Psoas muscle (tissue), 8 donors: ENCODE measurements at regions of chr19 and their contacts with region 1.

Region 1: GRCh38 chr19:47296036-47296435 is 13.6 kb upstream of the C5AR1 start:
- DNase-seq: peak; percentile 49 to 66
- ATAC-seq: peak; percentile 64 to 86 (median 76)
- H3K4me3 ChIP-seq: no peak overlapping the region
- H3K27ac ChIP-seq: no peak overlapping the region
- H3K4me1 ChIP-seq: no peaks in the 10 kb centered on the region
- H3K27me3 ChIP-seq: no peaks in the 10 kb centered on the region
- CTCF ChIP-seq: peak; percentile 73

Region 2: DNA sequence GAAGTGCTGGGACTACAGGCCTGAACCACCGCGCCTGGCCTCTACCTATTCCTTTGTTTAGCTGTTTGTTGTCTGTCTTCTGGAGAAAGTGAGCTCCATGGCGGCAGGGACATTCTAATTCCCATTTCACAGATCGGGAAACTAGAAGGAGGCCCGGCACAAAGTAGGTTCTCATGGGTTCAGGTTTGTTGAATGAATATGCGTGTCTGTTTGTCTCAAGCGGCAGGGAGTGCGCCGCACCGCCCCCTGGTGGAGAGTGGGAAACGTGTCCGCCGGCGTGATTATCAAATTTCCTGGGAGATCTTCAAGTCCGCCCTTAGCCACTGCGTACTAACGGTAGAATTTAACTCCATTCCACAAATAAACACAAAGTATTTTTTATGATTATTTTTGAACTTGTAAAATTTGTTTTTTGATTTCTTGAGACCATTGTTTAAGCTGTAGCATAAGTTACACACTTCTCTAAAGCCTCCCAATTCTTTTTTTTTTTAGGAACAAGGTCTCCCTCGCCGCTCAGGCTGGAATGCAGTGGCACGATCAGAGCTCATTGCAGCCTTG is 48.6 kb before region 1 on chr19:
- intact Hi-C with region 1: no loop called
- DNase-seq: peak; percentile 86 to 89
- ATAC-seq: peak in 2 of 4 donors; percentile 52 to 62
- H3K4me3 ChIP-seq: no peak overlapping the region
- H3K27ac ChIP-seq: no peak overlapping the region
- H3K4me1 ChIP-seq: peaks cover 7% of the 10 kb centered on the region
- H3K27me3 ChIP-seq: peaks cover 0 to 2% (median 0%) of the 10 kb centered on the region in 3 donors
- CTCF ChIP-seq: peak; percentile 95

Region 3: DNA sequence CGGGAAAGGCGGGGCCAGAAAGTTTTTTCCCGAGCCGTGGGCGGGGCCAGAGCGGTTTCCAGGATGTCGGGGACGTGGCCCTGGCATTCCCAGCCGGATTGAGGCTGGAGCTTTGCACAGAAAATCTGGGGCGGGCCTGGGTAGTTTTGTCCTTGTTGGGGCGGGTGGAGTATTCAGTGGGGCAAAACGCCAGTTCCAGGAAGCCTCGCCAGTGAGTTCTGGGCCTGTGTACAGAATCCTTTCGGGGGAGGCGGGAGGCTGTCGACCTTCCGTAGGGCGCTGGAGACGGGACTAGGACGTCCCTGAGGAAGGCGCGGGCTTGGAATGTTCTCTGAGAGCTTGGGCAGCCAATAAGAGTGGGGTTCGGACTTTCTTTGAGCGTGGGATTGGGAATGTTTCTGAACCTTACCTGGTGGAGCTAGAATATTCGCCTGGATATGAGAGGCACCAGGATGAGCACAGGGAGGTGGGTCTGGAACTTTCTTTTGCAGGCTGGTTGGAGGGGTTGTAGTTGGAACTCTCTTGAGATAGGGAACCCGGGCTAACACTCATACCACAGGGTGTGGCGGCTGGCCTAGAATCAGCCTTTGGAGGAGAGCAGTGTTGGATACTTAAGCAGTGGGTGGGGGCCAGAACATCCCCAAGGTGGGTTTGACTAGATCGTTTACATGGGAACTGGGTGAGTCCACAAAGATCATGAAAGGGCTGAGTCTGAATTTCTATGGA is 38.4 kb before region 1 on chr19:
- intact Hi-C with region 1: no loop called
- DNase-seq: no peak
- ATAC-seq: peak; percentile 8 to 30 (median 20)
- H3K4me3 ChIP-seq: peak overlapping the region; percentile 68
- H3K27ac ChIP-seq: peak overlapping the region; percentile 89
- H3K4me1 ChIP-seq: peaks cover 30% of the 10 kb centered on the region
- H3K27me3 ChIP-seq: no peaks in the 10 kb centered on the region
- CTCF ChIP-seq: no peak

Region 4: DNA sequence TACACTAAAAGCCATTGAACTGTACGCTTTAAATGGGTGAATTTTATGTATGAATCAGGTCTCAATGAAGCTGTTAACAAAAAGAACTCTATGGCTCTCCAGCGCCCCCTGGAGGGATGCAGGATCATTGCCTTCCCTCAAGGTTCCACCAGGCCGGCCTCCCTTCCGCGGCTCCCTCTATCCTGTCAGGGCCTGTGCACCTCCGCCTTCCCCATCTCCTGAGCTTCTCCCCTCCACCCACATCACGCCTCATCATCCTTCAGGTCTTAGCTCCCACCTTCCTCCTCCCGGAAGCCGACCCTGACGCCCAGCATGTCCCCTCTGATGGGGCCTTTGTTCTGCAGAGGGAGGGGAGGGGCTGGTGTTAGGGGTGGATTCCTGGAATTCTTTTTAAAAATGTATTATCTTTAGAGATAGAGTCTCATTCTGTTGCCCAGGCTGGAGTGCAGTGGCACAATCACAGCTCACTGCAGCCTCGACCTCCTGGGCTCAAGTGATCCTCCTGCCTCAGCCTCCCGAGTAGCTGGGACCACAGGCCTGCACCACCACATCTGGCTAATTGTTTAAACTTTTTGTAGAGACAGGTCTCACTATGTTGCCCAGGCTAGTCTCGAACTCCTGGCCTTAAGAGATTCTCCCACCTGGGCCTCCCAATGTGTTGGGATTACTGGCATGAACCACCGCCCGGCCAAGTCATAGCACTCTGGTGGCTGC is 95.6 kb after region 1 on chr19:
- intact Hi-C with region 1: loop called (anchors 2 to 10 kb)
- DNase-seq: peak; percentile 73 to 81
- ATAC-seq: peak; percentile 67 to 71 (median 68)
- H3K4me3 ChIP-seq: no peak overlapping the region
- H3K27ac ChIP-seq: no peak overlapping the region
- H3K4me1 ChIP-seq: no peaks in the 10 kb centered on the region
- H3K27me3 ChIP-seq: peaks cover 0 to 4% (median 1%) of the 10 kb centered on the region in 3 donors
- CTCF ChIP-seq: peak; percentile 82

Region 5: DNA sequence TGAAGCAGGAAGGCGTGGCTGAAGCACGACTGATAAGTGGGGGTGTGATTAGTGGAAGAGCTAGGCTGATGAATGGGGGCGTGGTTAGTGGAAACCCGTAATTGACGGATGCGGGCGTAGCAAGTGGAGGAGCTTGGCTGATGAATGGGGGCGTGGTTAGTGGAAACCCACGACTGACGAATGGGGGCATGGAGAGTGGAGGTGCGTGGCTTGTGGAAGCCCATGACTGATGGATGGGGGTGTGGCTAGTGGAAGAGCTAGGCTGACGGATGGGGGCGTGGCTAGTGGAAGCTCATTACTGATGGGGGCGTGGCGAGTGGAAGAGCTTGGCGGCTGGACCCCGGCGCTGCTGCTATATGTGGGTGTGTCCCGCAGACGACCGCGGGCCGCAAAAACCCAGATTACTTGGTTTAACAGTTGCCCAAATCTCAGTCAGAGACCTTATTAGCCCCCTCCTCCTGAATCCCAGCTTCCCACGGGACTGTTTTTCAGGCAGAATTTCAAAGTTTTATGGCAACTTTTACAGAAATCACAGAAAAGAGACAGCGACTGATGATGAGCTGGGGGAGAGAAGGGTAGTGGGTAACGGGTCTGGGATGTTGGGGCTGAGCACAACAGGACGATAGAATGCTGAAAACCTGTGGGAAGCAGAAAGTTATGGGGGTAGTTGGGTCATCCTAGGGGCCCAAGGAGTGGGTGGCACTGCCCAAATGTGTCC is 132.3 kb after region 1 on chr19:
- intact Hi-C with region 1: loop called in 1 of 2 experiments (anchors 10 kb)
- DNase-seq: peak; percentile 81 to 82
- ATAC-seq: peak; percentile 72 to 84 (median 78)
- H3K4me3 ChIP-seq: no peak overlapping the region
- H3K27ac ChIP-seq: no peak overlapping the region
- H3K4me1 ChIP-seq: peaks cover 7% of the 10 kb centered on the region
- H3K27me3 ChIP-seq: peaks cover 0 to 84% (median 23%) of the 10 kb centered on the region in 3 donors
- CTCF ChIP-seq: no peak

Region 6: DNA sequence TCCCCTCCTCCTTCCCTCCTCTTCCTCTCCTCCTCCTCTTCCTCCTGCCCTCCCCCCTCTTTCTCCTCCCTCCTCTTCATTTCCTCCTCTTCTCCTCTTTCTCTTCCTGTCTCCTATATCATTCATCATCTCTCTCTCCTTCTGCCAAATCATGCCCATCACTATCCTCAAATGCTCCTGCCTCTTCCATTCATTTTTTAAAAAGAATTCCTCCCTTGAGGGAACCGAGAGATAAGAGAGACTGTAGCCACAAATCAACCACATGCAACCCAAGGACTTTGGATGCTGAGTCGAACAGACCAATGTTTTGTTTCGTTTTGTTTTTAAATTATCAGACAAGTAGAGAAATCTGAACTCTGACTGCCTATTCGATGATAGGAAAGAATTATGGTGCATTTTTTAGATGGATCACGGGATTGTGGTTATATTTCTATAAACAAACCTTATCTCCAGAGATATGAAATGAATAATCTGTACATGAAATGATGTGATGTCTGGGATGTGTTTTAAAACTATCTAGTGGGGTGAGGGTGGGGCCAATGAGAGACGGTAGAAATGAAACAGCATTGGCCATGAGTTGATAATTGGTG is 286.4 kb after region 1 on chr19:
- intact Hi-C with region 1: no loop called
- DNase-seq: no peak
- ATAC-seq: no peak
- H3K4me3 ChIP-seq: no peak overlapping the region
- H3K27ac ChIP-seq: no peak overlapping the region
- H3K4me1 ChIP-seq: no peaks in the 10 kb centered on the region
- H3K27me3 ChIP-seq: no peaks in the 10 kb centered on the region
- CTCF ChIP-seq: no peak